CD8-positive, alpha-beta T cell (primary cell): ENCODE measurements at regions of chr14 and their contacts with region 1.

Region 1: DNA sequence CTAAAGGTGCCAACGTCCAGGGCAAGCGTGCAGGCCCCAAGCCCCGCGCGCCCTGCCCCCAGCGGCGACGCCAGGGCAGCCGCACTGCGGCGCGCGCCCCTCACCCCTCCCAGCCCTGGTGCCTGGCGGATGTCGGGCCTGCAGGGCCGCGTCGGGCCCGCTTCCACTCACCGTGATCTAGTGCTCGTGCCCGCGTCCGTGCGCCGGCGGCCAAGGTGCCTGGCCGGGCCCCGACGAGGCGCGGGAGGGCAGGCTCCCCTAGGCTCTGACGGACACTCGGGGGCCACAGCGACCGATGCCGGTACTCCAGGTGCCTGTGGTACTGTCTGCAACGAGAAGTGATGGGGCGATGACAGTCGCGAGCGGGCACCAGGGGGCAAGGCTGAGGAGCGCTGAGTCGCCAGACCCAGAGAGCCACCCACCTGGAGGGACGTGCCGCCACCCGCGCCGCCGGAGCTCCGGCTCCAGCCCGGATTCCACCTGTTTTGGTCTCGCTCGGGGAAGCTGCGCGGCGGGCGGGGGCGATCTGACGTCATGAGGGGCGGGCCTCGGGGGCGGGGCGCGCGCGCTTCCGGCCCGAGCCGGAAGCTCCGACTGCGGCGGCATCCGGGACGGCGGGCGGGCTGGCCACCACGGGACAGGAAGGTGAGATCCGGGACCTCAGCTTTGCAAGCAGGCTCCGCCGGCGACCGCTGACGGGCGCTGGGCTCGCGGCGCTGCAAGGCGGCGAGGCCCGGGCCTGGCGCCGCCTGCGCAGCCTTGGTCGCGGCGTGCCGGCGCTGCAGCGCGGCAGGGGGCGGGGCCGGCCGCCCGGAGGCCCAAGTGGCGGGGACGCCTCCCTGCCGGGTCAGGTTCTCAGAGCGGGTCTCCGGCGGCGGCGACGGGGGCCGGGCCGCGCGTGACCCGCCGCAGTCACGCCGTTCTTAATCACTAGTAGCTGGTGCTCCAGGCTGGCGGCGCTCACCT is at the starts of genes LYSET and MOAP1:
- DNase-seq: peak; percentile 84 to 97 (median 92)
- ATAC-seq: peak; percentile 86
- H3K4me3 ChIP-seq: peak within 1 kb of the TSS; percentile 89 to 100
- H3K4me3 Mint-ChIP-seq: peak within 1 kb of the TSS; percentile 92
- H3K27ac ChIP-seq: peak within 1 kb of the TSS; percentile 97 to 100
- H3K27ac Mint-ChIP-seq: peak within 1 kb of the TSS; percentile 95
- H3K4me1 ChIP-seq: peaks cover 34% of the 10 kb centered on the region
- H3K4me1 Mint-ChIP-seq: peaks cover 45% of the 10 kb centered on the region
- H3K27me3 ChIP-seq: no peaks in the 10 kb centered on the region
- H3K27me3 Mint-ChIP-seq: no peaks in the 10 kb centered on the region
- CTCF ChIP-seq: peak; percentile 49
- total RNA-seq, gene LYSET: 2.4 to 5.1 TPM
- total RNA-seq, gene MOAP1: 114 to 122 TPM

Region 2: DNA sequence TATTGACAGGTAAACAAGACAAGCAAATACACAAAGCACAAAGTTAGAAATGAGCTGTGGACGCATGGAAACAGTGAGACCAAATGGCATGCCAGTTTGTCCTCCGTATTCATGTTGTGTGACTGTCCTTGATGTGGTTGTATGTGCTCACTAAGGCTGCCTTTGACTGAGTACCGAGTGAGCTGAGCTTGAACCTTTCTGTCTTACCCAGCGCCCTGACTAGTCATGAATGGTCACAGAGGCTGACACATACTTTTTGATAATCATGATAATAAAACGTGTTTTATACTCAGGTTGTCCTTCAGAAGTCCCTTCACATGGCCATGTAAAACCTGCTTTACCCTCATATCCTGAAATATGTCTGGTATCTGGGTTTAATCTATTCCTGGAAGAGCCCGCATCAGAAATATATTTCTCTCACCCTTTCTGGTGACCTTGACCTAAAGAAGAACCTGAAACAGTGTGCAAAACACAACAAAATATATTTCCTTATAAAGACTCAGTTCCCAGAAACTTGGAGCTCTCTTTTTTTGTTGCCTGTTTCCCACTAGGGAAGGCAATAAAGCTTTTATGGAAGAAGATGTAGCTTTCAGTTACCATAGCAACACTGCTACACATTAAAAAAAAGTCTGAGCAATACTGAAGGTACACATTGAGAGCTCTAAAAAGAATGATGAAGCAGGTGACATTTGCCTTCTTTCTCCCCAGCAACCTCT is 1452.1 kb before region 1 on chr14:
- CTCF ChIA-PET with region 1: no interaction called
- POLR2A ChIA-PET with region 1: no interaction called
- intact Hi-C with region 1: no loop called
- DNase-seq: no peak
- ATAC-seq: no peak
- H3K4me3 ChIP-seq: no peak overlapping the region
- H3K4me3 Mint-ChIP-seq: no peak overlapping the region
- H3K27ac ChIP-seq: no peak overlapping the region
- H3K27ac Mint-ChIP-seq: no peak overlapping the region
- H3K4me1 ChIP-seq: no peaks in the 10 kb centered on the region
- H3K4me1 Mint-ChIP-seq: peaks cover 1% of the 10 kb centered on the region
- H3K27me3 ChIP-seq: no peaks in the 10 kb centered on the region
- H3K27me3 Mint-ChIP-seq: peaks cover 6% of the 10 kb centered on the region
- CTCF ChIP-seq: no peak

Region 3: DNA sequence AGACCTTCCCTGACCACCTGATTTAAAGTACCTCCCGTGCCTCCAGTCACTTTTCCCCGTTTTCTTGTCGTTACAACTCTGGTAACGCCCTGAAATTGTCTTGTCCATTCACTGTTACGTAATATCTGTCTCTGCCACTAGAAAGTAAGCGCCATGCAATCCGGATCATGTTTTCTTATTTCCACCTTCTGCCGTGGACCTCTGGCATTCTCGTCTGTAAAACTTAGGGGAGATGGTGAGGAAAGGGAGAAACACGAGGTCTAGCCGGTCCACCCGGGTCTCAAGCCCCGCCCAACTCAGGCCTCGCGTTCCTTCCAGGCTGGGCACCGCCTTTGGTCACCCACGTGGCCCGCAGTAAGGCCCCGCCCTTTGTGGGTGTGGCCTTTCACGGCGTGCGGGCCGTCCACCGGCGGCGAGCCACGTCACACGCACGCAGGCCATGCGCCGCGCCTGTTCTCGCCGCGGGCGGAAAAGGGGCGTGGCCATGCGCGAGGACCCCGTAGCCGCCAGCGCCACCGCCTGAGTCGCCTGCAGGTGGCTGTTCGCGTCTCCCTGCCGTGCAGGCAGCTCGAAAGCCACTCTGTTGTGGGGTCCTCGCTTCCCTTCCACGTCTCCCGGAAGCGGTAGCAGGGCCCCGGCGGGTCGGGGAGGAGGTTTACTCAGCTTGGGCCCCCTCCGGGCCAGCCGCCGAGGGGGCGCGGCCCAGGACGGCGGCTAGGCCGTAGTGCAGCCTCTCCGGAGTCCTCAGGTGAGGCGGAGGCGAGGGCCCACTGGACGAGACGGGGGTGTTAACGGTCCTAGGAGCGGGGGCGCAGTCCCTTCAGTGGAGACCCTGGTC is 390.7 kb before region 1 on chr14 and contains the start of gene GOLGA5:
- CTCF ChIA-PET with region 1: no interaction called
- POLR2A ChIA-PET with region 1: no interaction called
- intact Hi-C with region 1: loop called (anchors 1 to 5 kb)
- DNase-seq: peak; percentile 97 to 99 (median 98)
- ATAC-seq: peak; percentile 94
- H3K4me3 ChIP-seq: peak within 1 kb of the TSS; percentile 92 to 99
- H3K4me3 Mint-ChIP-seq: peak within 1 kb of the TSS; percentile 97
- H3K27ac ChIP-seq: peak within 1 kb of the TSS; percentile 88 to 92
- H3K27ac Mint-ChIP-seq: peak within 1 kb of the TSS; percentile 97
- H3K4me1 ChIP-seq: peaks cover 27% of the 10 kb centered on the region
- H3K4me1 Mint-ChIP-seq: peaks cover 38% of the 10 kb centered on the region
- H3K27me3 ChIP-seq: no peaks in the 10 kb centered on the region
- H3K27me3 Mint-ChIP-seq: no peaks in the 10 kb centered on the region
- CTCF ChIP-seq: no peak
- total RNA-seq, gene GOLGA5: 4.5 to 5.9 TPM

Region 4: GRCh38 chr14:93059917-93060545 is 124.6 kb before region 1 on chr14:
- CTCF ChIA-PET with region 1: no interaction called
- POLR2A ChIA-PET with region 1: interaction called, 5 read pairs
- intact Hi-C with region 1: loop called in 1 of 2 experiments (anchors 5 kb)
- DNase-seq: peak in 7 of 9 experiments; percentile 24 to 74 (median 37)
- ATAC-seq: peak; percentile 85
- H3K4me3 ChIP-seq: peak overlapping the region in 1 of 2 experiments; percentile 37
- H3K4me3 Mint-ChIP-seq: peak overlapping the region; percentile 58
- H3K27ac ChIP-seq: peak overlapping the region; percentile 21 to 36
- H3K27ac Mint-ChIP-seq: peak overlapping the region; percentile 92
- H3K4me1 ChIP-seq: peaks cover 66% of the 10 kb centered on the region
- H3K4me1 Mint-ChIP-seq: peaks cover 71% of the 10 kb centered on the region
- H3K27me3 ChIP-seq: no peaks in the 10 kb centered on the region
- H3K27me3 Mint-ChIP-seq: no peaks in the 10 kb centered on the region
- CTCF ChIP-seq: no peak

Region 5: GRCh38 chr14:93173943-93174395 is 10.7 kb before region 1 on chr14:
- CTCF ChIA-PET with region 1: interaction called, 10 read pairs
- POLR2A ChIA-PET with region 1: interaction called, 4 read pairs
- intact Hi-C with region 1: no loop called
- DNase-seq: no peak
- ATAC-seq: no peak
- H3K4me3 ChIP-seq: no peak overlapping the region
- H3K4me3 Mint-ChIP-seq: no peak overlapping the region
- H3K27ac ChIP-seq: no peak overlapping the region
- H3K27ac Mint-ChIP-seq: no peak overlapping the region
- H3K4me1 ChIP-seq: no peaks in the 10 kb centered on the region
- H3K4me1 Mint-ChIP-seq: peaks cover 4% of the 10 kb centered on the region
- H3K27me3 ChIP-seq: no peaks in the 10 kb centered on the region
- H3K27me3 Mint-ChIP-seq: no peaks in the 10 kb centered on the region
- CTCF ChIP-seq: no peak

Region 6: GRCh38 chr14:93332853-93333630 is 148.4 kb after region 1 on chr14 and contains the start of gene BTBD7:
- CTCF ChIA-PET with region 1: no interaction called
- POLR2A ChIA-PET with region 1: interaction called, 5 read pairs
- intact Hi-C with region 1: loop called (anchors 1 to 2 kb)
- DNase-seq: peak; percentile 87 to 98 (median 94)
- ATAC-seq: peak; percentile 92
- H3K4me3 ChIP-seq: peak within 1 kb of the TSS; percentile 81 to 85
- H3K4me3 Mint-ChIP-seq: peak within 1 kb of the TSS; percentile 95
- H3K27ac ChIP-seq: peak within 1 kb of the TSS; percentile 80 to 83
- H3K27ac Mint-ChIP-seq: peak within 1 kb of the TSS; percentile 95
- H3K4me1 ChIP-seq: peaks cover 27% of the 10 kb centered on the region
- H3K4me1 Mint-ChIP-seq: peaks cover 50% of the 10 kb centered on the region
- H3K27me3 ChIP-seq: no peaks in the 10 kb centered on the region
- H3K27me3 Mint-ChIP-seq: no peaks in the 10 kb centered on the region
- CTCF ChIP-seq: no peak
- total RNA-seq, gene BTBD7: 22.9 to 23.5 TPM